G401 (cell line): ENCODE measurements at regions of chr3 and their contacts with region 1.

Region 1: GRCh38 chr3:39107388-39108199 is at the starts of genes GORASP1 and TTC21A:
- DNase-seq: peak; percentile 93
- total RNA-seq, gene GORASP1: 28.2 and 37.3 TPM in 2 replicates
- total RNA-seq, gene TTC21A: 1.2 and 4.8 TPM in 2 replicates

Region 2: GRCh38 chr3:38940394-38940793 is 167.2 kb before region 1 on chr3:
- in situ Hi-C with region 1: no loop called
- DNase-seq: no peak

Region 3: DNA sequence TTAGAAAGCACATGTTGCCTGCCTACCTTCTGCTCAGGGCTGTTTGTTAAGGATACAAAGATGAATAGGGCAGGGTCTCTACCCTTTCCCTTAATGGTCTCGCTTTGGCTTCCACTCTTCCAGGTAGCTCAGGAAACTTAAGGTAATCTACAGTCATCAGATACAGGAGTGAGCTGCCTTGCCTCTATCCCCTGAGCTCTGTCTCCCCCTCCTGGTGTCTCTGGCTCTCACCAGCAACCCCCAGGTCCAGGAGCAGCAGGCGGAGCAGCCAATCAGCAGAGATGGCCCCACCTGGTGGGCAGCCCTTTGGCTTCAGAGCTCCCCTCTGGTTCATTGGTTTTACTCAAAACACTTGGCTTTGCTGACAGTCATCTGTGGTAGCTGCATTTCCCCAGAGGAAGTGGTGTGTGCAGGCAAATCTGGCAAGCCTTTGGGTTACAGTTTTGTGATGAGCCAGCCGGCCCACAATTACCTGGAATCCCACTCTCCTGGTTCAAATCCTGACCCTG is 180.8 kb after region 1 on chr3:
- in situ Hi-C with region 1: loop called (anchors 25 kb)
- DNase-seq: peak; percentile 86